A549 (cell line): ENCODE measurements at regions of chr12 and their contacts with region 1.

Region 1: DNA sequence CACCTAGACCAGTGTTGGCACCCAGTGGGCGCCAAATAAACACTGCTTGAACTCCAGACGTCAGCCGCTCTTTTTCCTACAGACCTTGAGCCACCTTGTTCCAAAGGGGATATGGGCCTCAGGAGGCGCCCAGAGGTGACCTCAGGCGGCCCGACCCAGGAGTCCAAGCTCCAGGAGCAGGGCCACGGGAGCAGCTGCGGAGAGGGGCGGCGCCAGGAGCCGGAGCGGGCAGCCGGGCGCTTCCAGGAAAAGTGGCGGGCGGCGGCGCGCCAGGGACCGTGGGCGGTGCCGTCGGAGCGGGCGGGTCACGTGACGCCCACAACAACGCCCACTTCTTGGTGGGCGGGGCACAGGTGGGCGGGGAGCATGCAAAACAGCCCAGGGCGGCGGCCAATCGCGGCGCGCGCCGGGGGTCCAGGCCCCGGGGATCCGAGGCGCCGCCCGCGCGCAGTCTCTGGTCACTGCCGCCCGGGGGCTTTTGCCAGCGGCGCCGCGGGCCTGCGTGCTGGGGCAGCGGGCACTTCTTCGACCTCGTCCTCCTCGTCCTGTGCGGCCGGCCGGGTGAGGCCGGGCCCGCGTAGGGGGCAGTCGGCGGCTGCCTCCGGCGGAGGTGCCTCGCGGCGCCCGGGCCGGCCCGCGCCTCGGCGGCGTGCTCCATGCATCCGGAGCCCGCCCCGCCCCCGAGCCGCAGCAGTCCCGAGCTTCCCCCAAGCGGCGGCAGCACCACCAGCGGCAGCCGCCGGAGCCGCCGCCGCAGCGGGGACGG is at the start of gene ORAI1:
- DNase-seq: peak; percentile 80 to 96
- ATAC-seq: peak; percentile 80 to 87
- H3K4me3 ChIP-seq: peak within 1 kb of the TSS; percentile 67
- H3K27ac ChIP-seq: peak within 1 kb of the TSS; percentile 77 to 92
- H3K4me1 ChIP-seq: peaks cover 32% of the 10 kb centered on the region
- CTCF ChIP-seq: peak; percentile 22; the same call in 2 of the 3 replicates
- EP300 ChIP-seq: no peak
- POLR2A ChIP-seq: peak; percentile 85
- RAD21 ChIP-seq: 0 out of 5 replicates have a peak, but pooled peaks of 1 of the 2 experiments have one; percentile 7
- polyA plus RNA-seq, gene ORAI1: 22.1 and 26.6 TPM in 2 replicates

Region 2: GRCh38 chr12:121279507-121279915 is 346.8 kb before region 1 on chr12:
- CTCF ChIA-PET with region 1: no interaction called
- POLR2A ChIA-PET with region 1: no interaction called
- DNase-seq: no peak
- ATAC-seq: no peak; a peak in 1 of 6 replicates
- H3K4me3 ChIP-seq: no peak overlapping the region
- H3K27ac ChIP-seq: no peak overlapping the region
- H3K4me1 ChIP-seq: peaks cover 9% of the 10 kb centered on the region
- CTCF ChIP-seq: no peak
- EP300 ChIP-seq: no peak
- POLR2A ChIP-seq: no peak
- RAD21 ChIP-seq: no peak

Region 3: GRCh38 chr12:121520586-121521086 is 105.6 kb before region 1 on chr12:
- CTCF ChIA-PET with region 1: no interaction called
- POLR2A ChIA-PET with region 1: no interaction called
- DNase-seq: no peak
- ATAC-seq: no peak; a peak in 1 of 6 replicates
- H3K4me3 ChIP-seq: no peak overlapping the region
- H3K27ac ChIP-seq: no peak overlapping the region
- H3K4me1 ChIP-seq: no peaks in the 10 kb centered on the region
- CTCF ChIP-seq: no peak
- EP300 ChIP-seq: no peak
- POLR2A ChIP-seq: no peak
- RAD21 ChIP-seq: no peak

Region 4: DNA sequence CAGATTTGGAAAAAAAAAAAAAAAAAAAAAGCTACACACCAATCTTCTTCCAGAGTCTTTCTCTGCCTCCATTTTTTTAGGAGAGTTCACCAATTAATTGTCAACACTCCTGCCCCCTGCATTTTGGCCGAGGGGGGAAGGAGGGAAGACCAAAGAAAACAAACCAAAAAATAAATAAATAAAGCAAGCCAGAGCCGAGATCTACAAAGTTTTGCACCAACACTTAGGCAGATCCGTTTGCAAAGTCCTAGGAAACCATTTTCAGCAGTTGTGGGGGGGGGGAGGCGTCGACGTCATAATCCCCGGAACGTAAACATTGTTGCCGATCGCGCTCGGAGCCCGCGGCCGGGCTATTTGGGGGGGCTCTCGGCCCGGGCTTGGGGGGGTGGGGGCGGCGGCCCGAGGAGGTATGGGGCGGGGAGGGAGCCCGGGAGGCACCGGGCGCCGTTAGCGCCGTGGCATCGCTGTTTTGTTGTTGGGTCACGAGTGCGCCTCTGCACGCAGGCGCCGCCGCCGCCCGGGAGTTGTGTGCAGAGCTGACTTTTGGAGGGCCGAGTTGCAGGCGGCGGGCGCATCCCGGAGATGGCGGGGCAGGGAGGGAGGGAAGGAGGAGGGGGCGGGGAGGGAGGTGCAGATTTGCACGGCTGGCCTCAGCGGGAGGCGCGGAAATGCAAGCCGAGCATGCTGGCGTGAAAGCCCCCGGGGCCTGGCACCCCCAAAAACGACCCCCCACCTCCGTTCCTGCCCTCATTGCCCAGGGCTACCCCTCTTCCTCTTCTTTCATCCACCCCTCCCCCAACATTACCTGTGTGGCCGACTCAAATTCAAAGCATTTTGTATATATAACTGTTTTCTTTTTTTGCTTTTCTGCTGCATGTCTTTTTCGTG is 46.0 kb before region 1 on chr12:
- CTCF ChIA-PET with region 1: interaction called, 30 read pairs
- POLR2A ChIA-PET with region 1: interaction called, 24 read pairs
- DNase-seq: peak; percentile 58 to 67
- ATAC-seq: peak; percentile 78 to 80
- H3K4me3 ChIP-seq: peak overlapping the region; percentile 54
- H3K27ac ChIP-seq: peak overlapping the region; percentile 77 to 94
- H3K4me1 ChIP-seq: peaks cover 49% of the 10 kb centered on the region
- CTCF ChIP-seq: no peak
- EP300 ChIP-seq: no peak
- POLR2A ChIP-seq: peak; percentile 47
- RAD21 ChIP-seq: no peak

Region 5: GRCh38 chr12:121600702-121601336 is 25.5 kb before region 1 on chr12:
- CTCF ChIA-PET with region 1: interaction called, 19 read pairs
- POLR2A ChIA-PET with region 1: interaction called, 5 read pairs
- DNase-seq: no peak
- ATAC-seq: no peak
- H3K4me3 ChIP-seq: no peak overlapping the region
- H3K27ac ChIP-seq: no peak overlapping the region
- H3K4me1 ChIP-seq: peaks cover 7% of the 10 kb centered on the region; the same call in 2 of the 3 replicates
- CTCF ChIP-seq: no peak
- EP300 ChIP-seq: no peak
- POLR2A ChIP-seq: no peak
- RAD21 ChIP-seq: no peak

Region 6: DNA sequence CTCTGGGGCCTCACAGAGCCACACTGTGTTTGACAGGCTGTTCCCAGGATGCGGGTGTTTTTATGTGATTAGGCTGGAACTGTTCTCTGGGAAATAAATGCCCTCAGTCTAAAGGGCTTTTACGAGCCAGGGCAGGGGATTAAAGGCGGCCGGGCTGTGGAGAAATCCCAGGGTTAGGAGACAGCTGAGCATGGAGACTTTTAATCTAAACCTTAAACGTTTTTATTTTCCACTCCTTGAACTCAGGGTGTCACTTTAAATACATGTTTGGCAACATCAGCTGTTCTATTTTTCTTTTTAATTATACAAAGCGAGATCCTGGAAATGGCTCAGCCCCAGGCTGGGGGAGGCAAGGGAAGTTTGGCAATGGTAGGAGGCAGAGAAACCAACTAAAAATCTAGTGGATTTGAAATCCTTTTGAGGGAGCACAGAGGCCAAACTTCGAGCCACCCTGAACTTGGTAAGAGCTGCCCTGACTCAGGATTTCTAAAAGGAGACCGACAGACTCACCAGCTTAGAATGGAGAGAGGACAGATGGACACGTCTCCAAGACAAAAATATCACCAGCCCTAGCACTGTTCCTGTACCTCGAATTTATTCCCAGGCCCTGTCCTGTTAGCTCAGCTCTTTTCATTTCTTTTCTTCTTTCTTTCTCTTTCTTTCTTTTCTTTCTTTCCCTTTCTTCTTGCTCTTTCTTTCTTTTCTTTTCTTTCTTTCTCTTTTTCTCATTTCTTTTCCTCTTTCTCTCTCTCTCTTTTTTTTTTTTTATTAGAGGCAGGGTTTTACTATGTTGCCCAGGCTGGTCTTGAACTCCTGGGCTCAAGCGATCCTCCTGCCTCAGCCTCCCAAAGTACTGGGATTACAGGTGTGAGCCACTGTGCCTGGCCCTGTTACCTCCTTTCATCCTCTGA is 15.8 kb before region 1 on chr12:
- CTCF ChIA-PET with region 1: interaction called, 65 read pairs
- POLR2A ChIA-PET with region 1: no interaction called
- DNase-seq: no peak
- ATAC-seq: peak; percentile 13 to 55; a peak in 2 of 6 replicates
- H3K4me3 ChIP-seq: no peak overlapping the region
- H3K27ac ChIP-seq: 0 out of 6 replicates have a peak overlapping the region, but pooled peaks of 1 of the 2 experiments have one; percentile 23
- H3K4me1 ChIP-seq: no peaks in the 10 kb centered on the region
- CTCF ChIP-seq: no peak
- EP300 ChIP-seq: no peak
- POLR2A ChIP-seq: no peak
- RAD21 ChIP-seq: no peak

Region 7: DNA sequence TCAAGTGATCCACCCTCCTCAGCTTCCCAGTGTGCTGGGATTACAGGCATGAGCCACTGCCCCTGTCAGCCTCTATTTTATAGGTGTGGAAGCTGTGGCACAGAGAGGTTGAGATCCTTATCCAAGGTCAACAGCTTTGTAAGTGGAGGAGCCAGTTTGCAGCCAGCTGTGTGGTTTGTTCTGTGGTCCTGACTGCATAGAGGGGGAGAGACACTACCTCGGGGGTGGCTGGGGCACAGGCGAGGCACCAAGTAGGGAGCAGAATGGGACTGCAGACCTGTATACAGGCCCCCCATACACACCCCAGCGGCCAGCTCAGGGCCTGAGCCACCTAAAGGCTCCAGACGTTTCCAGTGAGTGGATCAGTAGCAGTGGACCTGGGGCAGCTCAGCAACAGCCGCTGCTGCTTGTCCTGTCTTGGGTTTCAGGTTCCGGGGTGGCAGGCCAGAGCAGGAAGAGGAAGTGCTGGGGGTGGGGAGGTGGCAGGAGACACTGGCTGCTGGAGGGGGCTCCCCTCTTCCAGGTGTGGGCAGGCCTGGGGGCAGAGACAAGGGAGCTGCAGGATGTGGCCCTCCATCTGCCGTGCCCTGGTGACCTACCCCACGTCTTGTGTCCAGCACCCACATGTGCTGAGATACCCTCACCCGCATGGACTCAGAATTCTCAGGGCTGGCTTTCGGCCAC is 11.1 kb after region 1 on chr12:
- CTCF ChIA-PET with region 1: interaction called, 32 read pairs
- POLR2A ChIA-PET with region 1: interaction called, 6 read pairs
- DNase-seq: no peak
- ATAC-seq: peak in 1 of 2 experiments; percentile 11; a peak in 1 of 6 replicates
- H3K4me3 ChIP-seq: no peak overlapping the region
- H3K27ac ChIP-seq: no peak overlapping the region
- H3K4me1 ChIP-seq: peaks cover 9% of the 10 kb centered on the region; the same call in 2 of the 3 replicates
- CTCF ChIP-seq: no peak
- EP300 ChIP-seq: no peak
- POLR2A ChIP-seq: no peak
- RAD21 ChIP-seq: no peak

Region 8: GRCh38 chr12:121668750-121669520 is 42.7 kb after region 1 on chr12:
- CTCF ChIA-PET with region 1: interaction called, 37 read pairs
- POLR2A ChIA-PET with region 1: interaction called, 7 read pairs
- DNase-seq: peak; percentile 51 to 57
- ATAC-seq: peak; percentile 41 to 57; a peak in 3 of 6 replicates
- H3K4me3 ChIP-seq: no peak overlapping the region
- H3K27ac ChIP-seq: no peak overlapping the region
- H3K4me1 ChIP-seq: peaks cover 12% of the 10 kb centered on the region
- CTCF ChIP-seq: peak; percentile 57
- EP300 ChIP-seq: no peak
- POLR2A ChIP-seq: no peak
- RAD21 ChIP-seq: peak; percentile 61 to 70